SK-N-SH (cell line): ENCODE measurements at regions of chr10 and their contacts with region 1.

Region 1: GRCh38 chr10:80444646-80445319 is 9.3 kb upstream of the TSPAN14 start:
- DNase-seq: peak; percentile 58
- H3K4me3 ChIP-seq: no peak overlapping the region
- H3K27ac ChIP-seq: no peak overlapping the region
- H3K4me1 ChIP-seq: peaks cover 11 to 22% of the 10 kb centered on the region in 2 experiments; a peak in 3 of 4 replicates
- H3K27me3 ChIP-seq: no peaks in the 10 kb centered on the region
- CTCF ChIP-seq: peak; percentile 64
- EP300 ChIP-seq: no peak
- RAD21 ChIP-seq: peak; percentile 85

Region 2: DNA sequence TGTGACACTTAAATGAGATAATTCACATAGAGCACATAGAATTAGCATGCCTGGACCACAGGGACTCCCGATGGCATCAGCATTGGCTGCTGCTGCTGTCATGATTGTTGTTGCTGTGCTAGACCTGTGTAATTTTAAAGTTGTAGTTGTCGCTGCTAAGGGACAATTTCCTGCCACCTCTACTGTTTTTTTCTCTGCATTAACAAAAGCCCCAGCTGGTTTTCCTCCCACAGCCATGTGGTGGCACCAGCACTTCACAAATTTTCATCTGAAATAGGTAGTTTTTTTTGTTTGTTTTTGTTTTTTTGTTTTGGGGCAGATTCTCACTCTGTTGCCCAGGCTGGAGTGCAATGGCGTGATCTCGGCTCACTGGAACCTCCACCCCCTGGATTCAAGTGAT is 61.8 kb before region 1 on chr10:
- CTCF ChIA-PET with region 1: interaction called, 73 read pairs
- POLR2A ChIA-PET with region 1: no interaction called
- DNase-seq: peak; percentile 68
- H3K4me3 ChIP-seq: peak overlapping the region in 1 of 2 experiments; percentile 7; a peak in 1 of 4 replicates
- H3K27ac ChIP-seq: no peak overlapping the region
- H3K4me1 ChIP-seq: peaks cover 0 to 3% of the 10 kb centered on the region in 2 experiments; a peak in 1 of 4 replicates
- H3K27me3 ChIP-seq: no peaks in the 10 kb centered on the region; the same call in 1 of the 2 replicates
- CTCF ChIP-seq: peak; percentile 81
- EP300 ChIP-seq: no peak
- RAD21 ChIP-seq: peak; percentile 85

Region 3: GRCh38 chr10:80408242-80409101 is 36.3 kb before region 1 on chr10 and contains the start of gene PRXL2A:
- CTCF ChIA-PET with region 1: interaction called, 20 read pairs
- POLR2A ChIA-PET with region 1: interaction called, 7 read pairs
- DNase-seq: peak; percentile 99
- H3K4me3 ChIP-seq: peak within 1 kb of the TSS; percentile 69 to 88
- H3K27ac ChIP-seq: peak within 1 kb of the TSS in 1 of 2 experiments; percentile 78; a peak in 3 of 4 replicates
- H3K4me1 ChIP-seq: peaks cover 15 to 51% of the 10 kb centered on the region in 2 experiments; a peak in 3 of 4 replicates
- H3K27me3 ChIP-seq: no peaks in the 10 kb centered on the region
- CTCF ChIP-seq: no peak
- EP300 ChIP-seq: no peak
- RAD21 ChIP-seq: no peak
- polyA plus RNA-seq, gene PRXL2A: 14.0 and 15.6 TPM in 2 replicates

Region 4: DNA sequence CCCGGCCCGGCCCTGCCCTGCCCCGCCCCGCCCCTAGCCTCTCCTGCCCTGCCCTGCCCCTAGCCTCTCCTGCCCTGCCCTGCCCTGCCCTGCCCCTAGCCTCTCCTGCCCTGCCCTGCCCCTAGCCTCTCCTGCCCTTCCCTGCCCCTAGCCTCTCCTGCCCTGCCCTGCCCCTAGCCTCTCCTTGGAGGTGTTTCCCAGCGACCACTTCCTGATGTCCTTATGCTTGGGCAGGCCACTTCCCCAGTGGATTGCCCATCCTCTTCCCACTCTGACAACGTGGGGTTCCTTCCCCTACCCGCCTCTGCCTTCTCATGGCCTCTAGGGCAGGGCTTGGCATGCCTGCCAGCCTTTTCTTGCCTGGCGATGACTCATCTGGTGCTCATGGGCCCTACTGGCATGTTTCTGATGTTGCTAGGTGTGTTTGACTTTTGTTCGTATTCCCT is 15.2 kb before region 1 on chr10:
- CTCF ChIA-PET with region 1: interaction called, 44 read pairs
- POLR2A ChIA-PET with region 1: no interaction called
- DNase-seq: no peak
- H3K4me3 ChIP-seq: no peak overlapping the region
- H3K27ac ChIP-seq: 0 out of 4 replicates have a peak overlapping the region, but pooled peaks of 1 of the 2 experiments have one; percentile 18
- H3K4me1 ChIP-seq: no peaks in the 10 kb centered on the region; a peak in 1 of 4 replicates
- H3K27me3 ChIP-seq: no peaks in the 10 kb centered on the region
- CTCF ChIP-seq: no peak
- EP300 ChIP-seq: no peak
- RAD21 ChIP-seq: no peak

Region 5: DNA sequence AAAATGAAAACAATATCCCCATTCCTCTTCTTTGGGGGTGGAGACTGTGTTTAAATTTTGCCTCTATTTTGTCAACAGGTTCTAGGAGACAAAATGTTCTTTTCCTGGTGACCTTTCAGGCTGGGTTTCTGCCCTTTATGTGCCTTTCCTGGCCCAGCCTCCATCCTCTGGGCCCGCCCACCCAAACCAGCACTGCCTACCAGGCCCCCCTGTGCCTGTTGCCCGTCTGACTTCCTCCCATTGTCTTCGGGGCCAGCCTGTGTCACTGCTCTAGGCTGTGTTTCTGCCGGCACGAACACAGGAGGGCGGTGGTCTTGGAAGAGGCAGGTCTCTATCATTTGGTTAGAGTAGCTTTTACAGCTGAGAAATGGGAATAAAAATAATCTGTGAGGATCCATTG is 23.2 kb after region 1 on chr10:
- CTCF ChIA-PET with region 1: interaction called, 38 read pairs
- POLR2A ChIA-PET with region 1: no interaction called
- DNase-seq: peak; percentile 63
- H3K4me3 ChIP-seq: no peak overlapping the region
- H3K27ac ChIP-seq: no peak overlapping the region; a peak in 1 of 4 replicates
- H3K4me1 ChIP-seq: peaks cover 40 to 54% of the 10 kb centered on the region in 2 experiments
- H3K27me3 ChIP-seq: no peaks in the 10 kb centered on the region
- CTCF ChIP-seq: no peak
- EP300 ChIP-seq: no peak
- RAD21 ChIP-seq: no peak